Common myeloid progenitor, CD34-positive (primary cell): ENCODE measurements at regions of chr10 and their contacts with region 1.

Region 1: DNA sequence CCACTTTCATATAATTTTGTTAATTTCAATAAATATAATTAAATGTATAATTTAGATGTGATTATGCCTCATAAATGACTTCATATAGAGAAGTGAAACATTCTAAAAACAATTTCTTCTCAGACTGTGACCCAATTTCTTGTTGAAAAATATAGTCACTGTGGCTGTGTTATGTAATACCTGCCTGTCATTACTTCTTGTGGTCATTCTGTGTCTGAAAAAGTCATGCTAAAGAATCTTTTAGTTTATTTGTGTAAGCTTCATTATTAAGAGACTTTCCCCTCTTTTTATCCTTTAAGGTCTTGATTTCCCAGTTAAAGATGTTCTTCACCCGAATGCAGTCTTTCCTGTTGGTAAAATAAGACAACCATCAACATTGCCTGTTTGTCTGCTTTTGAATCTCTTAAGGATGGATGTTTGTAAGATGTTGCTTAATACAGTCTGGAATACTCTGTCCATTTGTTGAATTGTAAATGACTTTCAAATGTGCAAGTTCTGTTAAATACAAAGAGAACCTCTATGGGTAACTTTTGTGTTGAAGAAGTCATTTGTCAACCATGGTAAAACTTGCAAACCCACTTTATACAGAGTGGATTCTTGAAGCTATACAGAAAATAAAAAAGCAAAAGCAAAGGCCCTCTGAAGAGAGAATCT is 16.0 kb downstream of the KAT6B start:
- DNase-seq: peak in 2 of 3 donors; percentile 52 to 56
- H3K4me3 ChIP-seq: no peak overlapping the region
- H3K27ac ChIP-seq: peak overlapping the region in 1 of 2 experiments; percentile 19
- H3K4me1 ChIP-seq: peaks cover 0 to 20% (median 5%) of the 10 kb centered on the region in 4 experiments
- H3K27me3 ChIP-seq: no peaks in the 10 kb centered on the region

Region 2: DNA sequence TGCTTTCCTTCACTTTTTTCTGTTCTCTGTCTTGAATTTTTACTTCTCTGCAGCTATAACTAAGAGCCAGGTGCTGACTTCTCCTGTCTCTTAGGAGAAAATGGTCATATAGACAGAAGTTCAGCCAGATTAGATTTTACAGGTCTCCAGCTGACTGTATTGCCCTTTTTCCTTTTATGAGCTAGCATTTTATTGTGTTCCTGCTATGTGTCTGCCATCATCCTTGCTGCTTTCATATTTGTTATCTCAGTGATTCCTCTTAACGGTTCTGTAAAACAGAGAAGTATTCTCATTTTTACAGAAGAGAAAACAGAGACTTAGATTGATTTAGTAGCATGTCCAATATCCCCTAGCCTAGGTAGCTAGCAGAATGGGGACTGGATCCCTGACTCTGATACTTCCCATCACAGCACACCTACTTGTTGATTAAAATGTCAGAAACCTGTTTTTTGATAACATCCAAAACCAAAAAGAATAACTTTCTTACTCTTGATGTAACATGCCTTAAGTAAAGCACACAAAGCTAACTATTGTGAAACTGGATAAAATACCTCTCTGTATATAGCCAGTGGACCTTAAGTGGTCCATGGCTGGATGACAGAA is 10.8 kb before region 1 on chr10:
- CTCF ChIA-PET with region 1: interaction called, 18 read pairs
- POLR2A ChIA-PET with region 1: no interaction called
- DNase-seq: peak in 1 of 3 donors; percentile 17
- H3K4me3 ChIP-seq: no peak overlapping the region
- H3K27ac ChIP-seq: peak overlapping the region in 1 of 2 experiments; percentile 13
- H3K4me1 ChIP-seq: peaks cover 21 to 46% (median 27%) of the 10 kb centered on the region in 4 experiments
- H3K27me3 ChIP-seq: no peaks in the 10 kb centered on the region